Prostate gland (tissue), 2 donors: ENCODE measurements at regions of chr3 and their contacts with region 1.

Region 1: DNA sequence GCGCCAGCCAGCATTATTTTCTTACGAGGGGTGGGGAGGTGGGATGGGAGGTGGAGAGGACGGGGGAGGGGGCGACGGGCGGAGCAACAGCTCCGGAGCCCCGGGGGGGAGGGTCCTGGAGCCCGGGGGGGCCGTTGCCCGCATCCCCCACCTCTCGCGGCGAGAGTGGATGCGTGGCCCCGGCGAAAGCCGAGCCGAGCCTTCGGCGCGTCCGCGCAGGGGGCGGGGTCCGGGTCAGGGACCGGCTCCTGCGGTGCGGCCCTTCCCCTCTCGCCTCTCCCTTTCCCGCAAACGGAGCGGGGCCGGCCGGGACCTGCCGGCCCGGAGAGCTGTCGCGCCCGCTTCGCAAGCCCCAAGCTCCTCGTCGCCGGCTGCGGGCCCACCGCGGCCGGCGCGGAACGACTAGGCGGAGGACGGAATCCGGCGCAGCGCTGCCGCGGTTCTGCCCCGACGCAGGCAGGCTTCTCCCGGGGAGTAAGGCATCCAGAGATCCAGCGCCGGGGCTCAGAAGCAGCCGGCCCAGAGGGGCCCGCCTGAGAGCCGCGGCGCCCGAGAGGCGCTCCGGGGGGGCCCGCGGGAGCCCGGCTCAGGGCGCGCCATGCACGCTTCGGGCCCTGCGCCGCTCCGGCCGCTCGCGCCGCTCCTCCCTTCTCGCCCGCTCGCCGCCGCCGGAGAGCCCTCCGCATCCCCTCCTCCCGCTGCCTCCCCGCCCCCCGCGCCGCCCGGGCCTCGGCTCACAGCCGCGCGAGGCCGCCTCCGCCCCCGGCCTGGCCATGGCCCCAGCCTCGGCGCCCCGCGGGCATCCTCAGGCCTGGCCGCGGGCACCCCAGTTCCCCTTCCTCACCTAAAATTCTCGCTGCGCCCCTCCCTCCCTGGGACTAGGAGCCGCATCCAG is 459 bp upstream of the ADCY5 start:
- DNase-seq: no peak
- H3K4me3 ChIP-seq: peak overlapping the region; percentile 53 to 55
- H3K27ac ChIP-seq: peak overlapping the region; percentile 75 to 80
- H3K4me1 ChIP-seq: no peaks in the 10 kb centered on the region
- H3K27me3 ChIP-seq: no peaks in the 10 kb centered on the region
- CTCF ChIP-seq: no peak
- POLR2A ChIP-seq: no peak

Region 2: DNA sequence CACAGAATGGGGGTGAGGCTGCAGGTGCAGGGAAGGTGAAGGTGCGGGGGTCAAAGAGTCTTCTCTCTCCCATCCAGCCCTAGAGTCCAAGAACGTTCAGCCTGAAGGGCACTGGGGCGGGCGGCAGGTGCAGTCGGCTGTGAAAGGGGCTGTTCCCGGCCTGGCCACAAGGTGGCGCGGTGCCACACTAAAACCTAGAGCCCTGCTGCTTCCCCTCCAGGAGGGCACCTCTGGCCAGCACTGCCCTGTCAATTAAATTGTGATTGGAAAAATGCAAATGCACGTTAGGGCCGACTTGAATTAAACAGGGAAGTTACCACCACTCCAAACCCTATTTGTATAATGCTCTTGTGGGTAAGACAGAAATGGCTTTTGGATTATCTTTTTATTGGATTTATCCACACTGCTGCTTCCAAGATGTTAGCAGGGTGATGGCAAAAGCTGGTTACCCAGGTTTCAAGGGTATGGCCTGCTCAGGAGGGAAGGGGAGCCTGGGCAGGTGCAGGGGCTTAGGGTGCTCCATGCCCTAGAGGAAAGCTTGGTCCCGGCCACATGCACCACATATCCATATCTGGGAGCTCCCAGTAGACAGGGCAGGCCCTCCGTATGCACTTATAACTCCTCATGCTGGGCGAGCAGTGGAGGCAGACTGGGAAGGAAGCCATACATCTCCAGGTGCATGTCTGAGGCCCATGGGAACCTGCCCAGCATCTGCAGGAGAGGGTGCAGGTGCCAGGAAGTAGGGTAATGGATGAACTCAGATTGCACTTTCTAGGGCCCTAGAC is 120.3 kb before region 1 on chr3:
- intact Hi-C with region 1: loop called (anchors 5 kb)
- DNase-seq: peak; percentile 66
- H3K4me3 ChIP-seq: no peak overlapping the region
- H3K27ac ChIP-seq: peak overlapping the region in 1 of 2 donors; percentile 69
- H3K4me1 ChIP-seq: no peaks in the 10 kb centered on the region
- H3K27me3 ChIP-seq: no peaks in the 10 kb centered on the region
- CTCF ChIP-seq: peak; percentile 93 to 99 (median 95)
- POLR2A ChIP-seq: no peak

Region 3: GRCh38 chr3:123385981-123386380 is 63.4 kb before region 1 on chr3:
- intact Hi-C with region 1: loop called (anchors 5 kb)
- DNase-seq: no peak
- H3K4me3 ChIP-seq: no peak overlapping the region
- H3K27ac ChIP-seq: peak overlapping the region; percentile 62 to 68
- H3K4me1 ChIP-seq: no peaks in the 10 kb centered on the region
- H3K27me3 ChIP-seq: no peaks in the 10 kb centered on the region
- CTCF ChIP-seq: no peak
- POLR2A ChIP-seq: no peak

Region 4: DNA sequence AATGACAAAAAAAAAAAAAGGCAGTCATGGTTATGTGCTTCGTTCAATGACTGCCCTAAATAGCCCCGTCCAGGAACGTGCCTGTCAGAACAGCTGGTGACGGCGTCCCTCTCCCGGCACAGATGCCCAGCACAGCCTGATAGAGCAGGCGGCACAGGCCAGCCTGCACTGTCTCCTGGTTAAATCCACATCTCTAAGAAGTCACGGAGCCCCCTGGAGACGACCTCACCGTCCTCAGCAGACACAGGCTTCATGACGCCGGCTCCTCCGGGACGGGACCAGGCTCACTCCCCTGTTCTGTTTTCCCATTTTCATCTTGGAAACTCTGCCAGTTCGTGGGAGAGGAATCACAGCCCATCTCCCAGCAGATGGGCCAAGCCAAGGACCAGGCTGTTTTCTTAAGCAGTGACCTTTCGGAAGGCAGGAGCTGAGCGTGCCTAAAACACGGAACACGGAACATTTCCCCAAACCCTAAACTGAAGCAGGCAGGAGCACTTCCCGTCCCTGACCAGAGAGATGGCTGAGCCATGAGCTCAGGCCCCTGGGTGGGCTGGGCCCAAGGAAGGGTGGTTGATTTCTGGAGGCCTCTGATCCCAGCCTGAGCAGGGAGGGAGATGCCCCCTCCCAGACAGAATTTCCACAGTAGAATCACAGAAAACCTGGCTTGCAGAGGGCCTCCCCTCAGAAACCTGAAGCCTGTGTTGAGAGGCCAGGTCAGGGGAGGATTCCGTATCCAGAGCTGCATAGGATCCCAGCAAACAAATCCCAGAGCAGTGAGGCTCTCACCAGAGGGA is 36.3 kb before region 1 on chr3:
- intact Hi-C with region 1: loop called (anchors 5 kb)
- DNase-seq: no peak
- H3K4me3 ChIP-seq: no peak overlapping the region
- H3K27ac ChIP-seq: peak overlapping the region; percentile 74 to 77
- H3K4me1 ChIP-seq: peaks cover 2% of the 10 kb centered on the region
- H3K27me3 ChIP-seq: no peaks in the 10 kb centered on the region
- CTCF ChIP-seq: no peak
- POLR2A ChIP-seq: no peak

Region 5: GRCh38 chr3:123489400-123490004 is 40.2 kb after region 1 on chr3:
- intact Hi-C with region 1: loop called (anchors 5 kb)
- DNase-seq: peak; percentile 31
- H3K4me3 ChIP-seq: no peak overlapping the region
- H3K27ac ChIP-seq: no peak overlapping the region
- H3K4me1 ChIP-seq: no peaks in the 10 kb centered on the region
- H3K27me3 ChIP-seq: no peaks in the 10 kb centered on the region
- CTCF ChIP-seq: peak; percentile 49 to 87 (median 75)
- POLR2A ChIP-seq: no peak